K562 (cell line): ENCODE measurements at regions of chr5 and their contacts with region 1.

Region 1: GRCh38 chr5:172044631-172045314 is 38.3 kb upstream of the FBXW11 start:
- DNase-seq: peak in 2 of 4 experiments; percentile 35 to 41
- ATAC-seq: peak; percentile 71
- H3K4me3 ChIP-seq: no peak overlapping the region
- H3K27ac ChIP-seq: no peak overlapping the region
- H3K4me1 ChIP-seq: peaks cover 0 to 3% of the 10 kb centered on the region in 2 experiments; a peak in 2 of 5 replicates
- H3K27me3 ChIP-seq: peaks cover 15 to 21% of the 10 kb centered on the region in 2 experiments; a peak in 4 of 5 replicates
- CTCF ChIP-seq: peak; percentile 26 to 49 (median 46); a peak in 4 of 6 replicates
- EP300 ChIP-seq: no peak
- POLR2A ChIP-seq: no peak
- RAD21 ChIP-seq: peak; percentile 24 to 52; a peak in 3 of 4 replicates

Region 2: GRCh38 chr5:171630027-171630669 is 414.6 kb before region 1 on chr5:
- CTCF ChIA-PET with region 1: no interaction called
- POLR2A ChIA-PET with region 1: no interaction called
- in situ Hi-C with region 1: no loop called
- intact Hi-C with region 1: loop called (anchors 10 kb)
- DNase-seq: peak; percentile 31 to 61 (median 46)
- ATAC-seq: peak; percentile 99
- H3K4me3 ChIP-seq: no peak overlapping the region
- H3K27ac ChIP-seq: no peak overlapping the region
- H3K4me1 ChIP-seq: peaks cover 0 to 5% of the 10 kb centered on the region in 2 experiments; a peak in 2 of 5 replicates
- H3K27me3 ChIP-seq: peaks cover 11 to 34% of the 10 kb centered on the region in 2 experiments
- CTCF ChIP-seq: peak; percentile 43 to 51 (median 51)
- EP300 ChIP-seq: no peak
- POLR2A ChIP-seq: no peak
- RAD21 ChIP-seq: peak in 1 of 2 experiments; percentile 54; a peak in 3 of 4 replicates

Region 3: DNA sequence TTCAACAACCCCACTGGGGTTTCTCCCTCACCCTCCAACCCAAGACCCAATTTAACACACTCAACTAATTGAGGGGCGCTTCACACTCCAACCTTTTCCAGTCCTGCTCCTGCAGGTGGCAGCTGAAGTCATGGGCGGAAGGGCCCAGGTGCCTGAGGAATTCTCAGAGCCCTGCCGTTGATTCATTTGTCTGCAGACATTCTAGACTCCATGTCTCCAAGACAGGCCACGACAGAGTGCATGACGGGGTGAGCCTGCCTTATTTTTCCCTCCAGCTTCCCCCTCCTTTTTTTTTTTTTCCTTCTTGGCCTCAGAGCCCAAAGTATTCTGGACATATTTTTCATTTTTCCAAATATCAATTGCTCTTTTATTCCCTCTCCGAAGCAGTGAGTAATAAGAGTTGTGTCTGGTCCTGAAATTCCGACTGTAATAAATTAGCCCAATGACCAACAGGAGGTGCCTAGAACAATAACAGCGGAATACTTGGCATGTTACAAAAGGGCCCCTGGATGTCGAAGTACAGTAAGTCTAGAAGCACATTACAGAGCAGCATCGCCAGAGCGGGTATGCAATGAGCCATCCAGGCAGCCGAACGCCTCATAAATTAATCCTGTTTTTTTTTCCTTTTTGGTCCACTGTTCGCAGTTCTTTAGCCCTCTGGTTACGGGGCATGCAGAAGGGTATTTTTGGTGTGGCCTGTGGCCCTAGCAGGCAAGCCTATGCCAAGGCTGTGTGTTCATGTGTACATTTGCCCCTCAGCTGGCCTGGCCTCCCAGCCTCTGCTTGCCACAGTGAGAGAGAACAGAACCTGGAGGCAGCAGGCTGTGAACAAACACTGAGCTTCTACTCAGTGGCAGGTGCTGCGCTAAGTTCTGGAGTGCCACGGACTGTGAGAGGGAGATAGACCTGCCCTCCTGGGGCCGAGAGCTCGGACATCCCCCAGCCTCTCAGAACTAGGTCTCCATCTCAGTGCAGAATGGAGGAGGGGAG is 267.7 kb before region 1 on chr5:
- CTCF ChIA-PET with region 1: no interaction called
- POLR2A ChIA-PET with region 1: no interaction called
- in situ Hi-C with region 1: no loop called
- intact Hi-C with region 1: loop called (anchors 10 kb)
- DNase-seq: no peak
- ATAC-seq: no peak
- H3K4me3 ChIP-seq: no peak overlapping the region
- H3K27ac ChIP-seq: no peak overlapping the region
- H3K4me1 ChIP-seq: no peaks in the 10 kb centered on the region
- H3K27me3 ChIP-seq: peaks cover 20 to 54% of the 10 kb centered on the region in 2 experiments; a peak in 3 of 5 replicates
- CTCF ChIP-seq: no peak
- EP300 ChIP-seq: no peak
- POLR2A ChIP-seq: no peak
- RAD21 ChIP-seq: no peak; a peak in 1 of 4 replicates

Region 4: GRCh38 chr5:171913987-171914273 is 130.8 kb before region 1 on chr5:
- CTCF ChIA-PET with region 1: interaction called, 43 read pairs
- POLR2A ChIA-PET with region 1: interaction called, 4 read pairs
- in situ Hi-C with region 1: no loop called
- intact Hi-C with region 1: loop called (anchors 1 kb)
- DNase-seq: no peak
- ATAC-seq: no peak
- H3K4me3 ChIP-seq: no peak overlapping the region
- H3K27ac ChIP-seq: no peak overlapping the region
- H3K4me1 ChIP-seq: no peaks in the 10 kb centered on the region
- H3K27me3 ChIP-seq: no peaks in the 10 kb centered on the region
- CTCF ChIP-seq: no peak
- EP300 ChIP-seq: no peak
- POLR2A ChIP-seq: no peak
- RAD21 ChIP-seq: no peak

Region 5: DNA sequence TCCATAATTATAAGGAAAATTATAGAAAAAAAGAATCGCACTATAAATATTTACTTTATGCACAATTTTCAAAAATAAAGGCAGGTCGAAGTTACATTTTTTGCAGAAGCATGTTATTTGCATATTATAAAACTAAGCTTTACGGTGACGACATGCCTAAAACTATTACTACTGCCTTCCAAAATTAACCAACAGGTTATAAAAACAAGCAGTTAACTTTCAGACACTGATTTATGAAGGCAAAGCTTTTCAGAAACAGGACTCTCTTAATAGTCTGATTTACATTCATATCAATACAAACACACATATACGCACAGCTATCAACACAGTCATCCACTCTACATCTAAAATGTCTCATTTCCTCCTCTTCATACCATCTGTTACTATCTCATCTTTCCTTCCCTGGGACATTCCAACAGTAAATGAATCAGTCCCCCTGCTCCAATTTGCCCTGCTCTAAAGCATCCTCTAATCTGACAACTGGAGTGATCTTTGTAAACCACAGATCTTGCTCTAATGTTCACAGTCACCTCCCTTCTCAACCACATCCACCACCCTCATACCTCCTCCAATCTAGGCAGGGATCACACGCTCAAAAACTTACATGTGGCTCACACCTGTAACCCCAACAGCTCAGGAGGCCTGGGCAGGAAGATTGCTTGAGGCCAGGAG is 59.9 kb before region 1 on chr5:
- CTCF ChIA-PET with region 1: no interaction called
- POLR2A ChIA-PET with region 1: no interaction called
- in situ Hi-C with region 1: no loop called
- intact Hi-C with region 1: no loop called
- DNase-seq: no peak
- ATAC-seq: peak; percentile 38
- H3K4me3 ChIP-seq: no peak overlapping the region
- H3K27ac ChIP-seq: no peak overlapping the region
- H3K4me1 ChIP-seq: peaks cover 5 to 6% of the 10 kb centered on the region in 2 experiments; a peak in 3 of 5 replicates
- H3K27me3 ChIP-seq: no peaks in the 10 kb centered on the region
- CTCF ChIP-seq: no peak
- EP300 ChIP-seq: no peak
- POLR2A ChIP-seq: no peak
- RAD21 ChIP-seq: no peak